Sigmoid colon (tissue), 7 donors: ENCODE measurements at regions of chr18 and their contacts with region 1.

Region 1: GRCh38 chr18:62721839-62722795 is 6.8 kb downstream of the PHLPP1 start:
- DNase-seq: no peak
- H3K4me3 ChIP-seq: no peak overlapping the region
- H3K27ac ChIP-seq: peak overlapping the region in 1 of 4 donors; percentile 36
- H3K4me1 ChIP-seq: peaks cover 0 to 60% (median 46%) of the 10 kb centered on the region in 4 donors
- H3K27me3 ChIP-seq: no peaks in the 10 kb centered on the region
- CTCF ChIP-seq: no peak
- EP300 ChIP-seq: no peak
- POLR2A ChIP-seq: no peak

Region 2: GRCh38 chr18:62790871-62791772 is 69.0 kb after region 1 on chr18:
- intact Hi-C with region 1: loop called (anchors 2 kb)
- DNase-seq: no peak
- H3K4me3 ChIP-seq: no peak overlapping the region
- H3K27ac ChIP-seq: peak overlapping the region in 3 of 4 donors; percentile 20 to 62 (median 44)
- H3K4me1 ChIP-seq: peaks cover 0 to 65% (median 52%) of the 10 kb centered on the region in 4 donors
- H3K27me3 ChIP-seq: no peaks in the 10 kb centered on the region
- CTCF ChIP-seq: no peak
- EP300 ChIP-seq: no peak
- POLR2A ChIP-seq: no peak